Activated CD4-positive, alpha-beta T cell treated with anti-CD3 and anti-CD28 coated beads, Interleukin-2, amount 10 ng/mL, durations not matched to agents 24 days and 14 days (primary cell): ENCODE measurements at regions of chr16 and their contacts with region 1.

Region 1: GRCh38 chr16:66894948-66895688 is 14.8 kb downstream of the PDP2 start:
- DNase-seq: peak; percentile 91
- H3K4me3 Mint-ChIP-seq: no peak overlapping the region
- H3K27ac Mint-ChIP-seq: no peak overlapping the region
- H3K4me1 Mint-ChIP-seq: peaks cover 22% of the 10 kb centered on the region
- H3K27me3 Mint-ChIP-seq: no peaks in the 10 kb centered on the region

Region 2: GRCh38 chr16:66924527-66925321 is 29.6 kb after region 1 on chr16:
- intact Hi-C with region 1: loop called (anchors 1 kb)
- DNase-seq: peak; percentile 84
- H3K4me3 Mint-ChIP-seq: peak overlapping the region; percentile 75
- H3K27ac Mint-ChIP-seq: no peak overlapping the region
- H3K4me1 Mint-ChIP-seq: peaks cover 26% of the 10 kb centered on the region
- H3K27me3 Mint-ChIP-seq: peaks cover 38% of the 10 kb centered on the region

Region 3: GRCh38 chr16:66935322-66936260 is 40.5 kb after region 1 on chr16 and contains the start of gene CES2:
- intact Hi-C with region 1: no loop called
- DNase-seq: no peak
- H3K4me3 Mint-ChIP-seq: peak within 1 kb of the TSS; percentile 99
- H3K27ac Mint-ChIP-seq: peak within 1 kb of the TSS; percentile 98
- H3K4me1 Mint-ChIP-seq: peaks cover 43% of the 10 kb centered on the region
- H3K27me3 Mint-ChIP-seq: no peaks in the 10 kb centered on the region
- total RNA-seq, gene CES2: 30.6 and 33.6 TPM in 2 replicates

Region 4: GRCh38 chr16:66947302-66948065 is 52.4 kb after region 1 on chr16:
- intact Hi-C with region 1: loop called (anchors 1 kb)
- DNase-seq: peak; percentile 96
- H3K4me3 Mint-ChIP-seq: peak overlapping the region; percentile 89
- H3K27ac Mint-ChIP-seq: peak overlapping the region; percentile 23
- H3K4me1 Mint-ChIP-seq: peaks cover 18% of the 10 kb centered on the region
- H3K27me3 Mint-ChIP-seq: peaks cover 32% of the 10 kb centered on the region

Region 5: GRCh38 chr16:67000384-67001351 is 105.5 kb after region 1 on chr16:
- intact Hi-C with region 1: no loop called
- DNase-seq: peak; percentile 89
- H3K4me3 Mint-ChIP-seq: peak overlapping the region; percentile 82
- H3K27ac Mint-ChIP-seq: peak overlapping the region; percentile 89
- H3K4me1 Mint-ChIP-seq: peaks cover 37% of the 10 kb centered on the region
- H3K27me3 Mint-ChIP-seq: no peaks in the 10 kb centered on the region